HCT116 (cell line): ENCODE measurements at regions of chr7 and their contacts with region 1.

Region 1: DNA sequence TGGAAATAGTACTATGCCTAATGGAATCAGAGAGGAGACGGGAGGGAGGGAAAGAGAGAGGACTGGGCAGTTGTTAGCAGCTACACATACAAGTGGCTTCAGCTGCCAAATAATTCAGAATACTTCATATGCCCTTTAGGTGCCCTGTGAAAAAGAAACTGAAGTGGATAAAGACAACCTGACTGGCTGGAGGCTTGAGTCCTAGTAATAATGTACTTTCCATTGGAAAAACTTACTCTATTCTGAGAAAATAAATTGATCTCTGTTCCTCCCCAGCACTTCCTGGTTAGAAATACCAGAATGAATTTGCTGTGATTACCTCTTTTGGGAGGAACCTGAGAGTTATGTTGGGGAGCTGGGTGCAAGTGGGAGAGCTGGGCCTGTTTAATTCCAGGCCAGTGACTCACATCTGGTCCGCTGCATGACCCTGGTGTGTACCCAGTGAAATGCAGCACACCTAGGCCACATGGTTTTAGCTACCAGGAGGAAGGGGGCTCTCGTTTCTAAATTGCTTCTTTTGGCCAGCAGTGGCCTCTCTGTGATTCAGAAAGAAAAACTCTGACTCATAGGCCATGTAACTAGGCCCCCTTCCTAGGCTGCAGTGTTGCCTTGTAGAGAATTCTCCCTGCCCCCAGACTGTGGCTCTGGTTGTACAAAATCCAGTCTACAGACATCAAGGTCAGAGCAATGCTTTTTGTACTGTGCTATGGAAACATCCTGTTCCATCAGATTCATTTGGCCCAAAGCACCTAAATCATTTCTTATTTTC is 6.5 kb downstream of the AGFG2 start:
- DNase-seq: peak; percentile 81
- ATAC-seq: peak; percentile 94
- H3K4me3 ChIP-seq: peak overlapping the region; percentile 22 to 38
- H3K27ac ChIP-seq: peak overlapping the region; percentile 95
- H3K4me1 ChIP-seq: peaks cover 50 to 56% of the 10 kb centered on the region in 2 experiments
- H3K27me3 ChIP-seq: no peaks in the 10 kb centered on the region
- CTCF ChIP-seq: no peak
- POLR2A ChIP-seq: no peak
- RAD21 ChIP-seq: no peak

Region 2: DNA sequence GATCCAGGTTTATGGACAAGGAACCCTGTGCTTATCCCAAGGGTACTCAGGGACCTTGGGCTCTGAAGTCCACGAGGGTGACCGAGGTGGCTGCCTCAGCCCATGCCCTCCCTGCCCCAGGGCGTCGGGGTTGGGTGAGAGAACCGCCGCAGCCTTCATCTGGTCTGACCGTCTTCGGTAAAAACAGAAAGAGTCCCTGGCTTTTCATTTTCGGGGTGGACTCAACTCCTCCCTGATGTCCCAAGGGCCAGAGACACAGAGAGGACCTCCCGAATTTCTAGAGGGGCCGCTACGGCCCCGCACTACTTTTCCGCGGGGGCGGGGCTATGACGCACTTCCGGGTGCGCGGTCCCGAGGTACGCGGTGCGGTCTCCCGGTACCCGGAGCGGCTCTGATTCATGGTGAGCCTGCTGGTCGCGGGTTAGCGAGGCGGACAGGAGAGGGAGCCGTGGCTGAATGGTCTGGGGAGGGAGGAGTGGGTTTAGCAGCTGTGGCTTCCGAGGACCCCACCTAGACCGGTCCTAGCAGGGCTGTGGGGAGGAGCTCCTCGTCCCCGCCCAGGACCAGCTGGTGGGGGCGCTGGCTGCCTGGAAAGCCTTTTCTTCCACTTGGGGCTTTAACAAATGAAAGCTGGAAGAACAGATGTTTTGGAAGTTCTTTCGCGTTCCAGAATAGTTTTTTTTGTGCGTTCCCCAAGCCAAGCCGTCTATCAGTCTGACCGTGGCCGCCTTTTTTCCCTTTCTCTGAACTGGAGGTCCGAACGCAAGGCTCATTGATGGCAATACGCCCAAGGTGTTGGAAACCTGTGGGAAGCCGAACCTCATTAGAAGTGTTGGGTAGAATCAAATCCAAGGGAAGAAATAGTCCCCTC is 495.9 kb before region 1 on chr7 and contains the start of gene ZSCAN21:
- CTCF ChIA-PET with region 1: no interaction called
- POLR2A ChIA-PET with region 1: no interaction called
- RAD21 ChIA-PET with region 1: no interaction called
- intact Hi-C with region 1: no loop called
- DNase-seq: peak; percentile 38
- ATAC-seq: peak; percentile 90
- H3K4me3 ChIP-seq: peak within 1 kb of the TSS; percentile 78 to 82
- H3K27ac ChIP-seq: peak within 1 kb of the TSS; percentile 77
- H3K4me1 ChIP-seq: peaks cover 10 to 16% of the 10 kb centered on the region in 2 experiments; a peak in 2 of 4 replicates
- H3K27me3 ChIP-seq: no peaks in the 10 kb centered on the region
- CTCF ChIP-seq: 0 out of 6 replicates have a peak, but pooled peaks of 1 of the 3 experiments have one; percentile 16
- POLR2A ChIP-seq: peak; percentile 54
- RAD21 ChIP-seq: peak; percentile 28; the same call in 1 of the 2 replicates
- total RNA-seq, gene ZSCAN21: 10.3 TPM

Region 3: DNA sequence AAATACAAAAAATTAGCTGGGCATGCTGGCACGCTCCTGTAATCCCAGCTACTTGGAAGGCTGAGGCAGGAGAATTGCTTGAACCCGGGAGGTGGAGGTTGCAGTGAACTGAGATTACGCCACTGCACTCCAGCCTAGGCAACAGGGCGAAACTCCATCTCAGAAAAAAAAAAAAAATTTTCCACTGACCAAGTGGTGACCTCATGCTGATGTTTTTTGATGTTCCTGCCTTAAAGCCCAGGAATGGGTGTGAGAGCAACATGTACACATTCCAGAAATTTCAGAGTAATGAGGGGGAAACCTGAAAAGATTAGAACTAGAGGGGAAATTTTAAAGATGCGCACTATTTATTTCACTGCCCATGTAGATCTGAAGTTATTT is 42.2 kb before region 1 on chr7:
- CTCF ChIA-PET with region 1: no interaction called
- POLR2A ChIA-PET with region 1: interaction called, 3 read pairs
- RAD21 ChIA-PET with region 1: no interaction called
- intact Hi-C with region 1: loop called (anchors 2 kb)
- DNase-seq: peak; percentile 62
- ATAC-seq: peak; percentile 65
- H3K4me3 ChIP-seq: peak overlapping the region; percentile 30 to 60
- H3K27ac ChIP-seq: peak overlapping the region; percentile 83
- H3K4me1 ChIP-seq: peaks cover 29 to 56% of the 10 kb centered on the region in 2 experiments
- H3K27me3 ChIP-seq: no peaks in the 10 kb centered on the region
- CTCF ChIP-seq: no peak
- POLR2A ChIP-seq: no peak
- RAD21 ChIP-seq: peak; percentile 3; the same call in 1 of the 2 replicates